ENCODE measurements at regions of chr5 and their contacts with region 1.

Region 1: DNA sequence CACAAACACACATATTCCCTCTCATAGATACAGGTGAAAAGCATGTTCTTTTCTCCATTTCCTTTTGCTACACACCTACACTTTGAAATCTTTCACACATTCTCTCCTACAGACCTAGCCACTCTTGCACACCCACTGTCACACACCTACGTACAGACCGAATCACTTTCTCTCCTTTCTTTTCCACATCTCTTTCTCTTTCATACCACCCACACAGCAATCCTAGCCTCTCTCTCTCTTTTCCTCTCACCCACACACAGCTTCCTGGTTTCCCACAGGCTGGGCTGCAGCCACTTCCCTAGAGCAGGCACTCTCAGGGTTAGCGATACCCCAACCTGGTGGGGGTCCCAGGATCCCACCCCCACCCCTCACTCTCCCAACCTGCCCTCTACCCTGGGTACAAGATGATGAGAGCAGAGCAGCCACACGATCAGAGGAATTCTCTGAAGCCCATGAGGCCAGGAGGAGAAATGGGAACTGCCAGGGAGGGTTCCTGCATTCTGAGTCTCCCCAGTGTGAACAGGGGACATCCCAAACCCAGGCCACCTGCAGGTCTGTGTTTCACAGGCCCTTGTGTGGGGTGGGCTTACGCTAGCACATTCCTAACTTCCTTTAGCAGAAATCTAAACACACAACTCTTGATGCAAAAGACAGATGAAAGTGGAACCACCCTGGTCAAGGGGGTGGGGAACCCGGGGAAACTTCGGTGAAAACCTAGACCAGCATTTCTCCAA is 17.1 kb upstream of the SYNPO start:
- DNase-seq: no peak
- H3K4me3 Mint-ChIP-seq: peak overlapping the region; percentile 71
- H3K27ac Mint-ChIP-seq: no peak overlapping the region
- H3K4me1 Mint-ChIP-seq: peaks cover 26% of the 10 kb centered on the region
- H3K27me3 Mint-ChIP-seq: peaks cover 4% of the 10 kb centered on the region

Region 2: DNA sequence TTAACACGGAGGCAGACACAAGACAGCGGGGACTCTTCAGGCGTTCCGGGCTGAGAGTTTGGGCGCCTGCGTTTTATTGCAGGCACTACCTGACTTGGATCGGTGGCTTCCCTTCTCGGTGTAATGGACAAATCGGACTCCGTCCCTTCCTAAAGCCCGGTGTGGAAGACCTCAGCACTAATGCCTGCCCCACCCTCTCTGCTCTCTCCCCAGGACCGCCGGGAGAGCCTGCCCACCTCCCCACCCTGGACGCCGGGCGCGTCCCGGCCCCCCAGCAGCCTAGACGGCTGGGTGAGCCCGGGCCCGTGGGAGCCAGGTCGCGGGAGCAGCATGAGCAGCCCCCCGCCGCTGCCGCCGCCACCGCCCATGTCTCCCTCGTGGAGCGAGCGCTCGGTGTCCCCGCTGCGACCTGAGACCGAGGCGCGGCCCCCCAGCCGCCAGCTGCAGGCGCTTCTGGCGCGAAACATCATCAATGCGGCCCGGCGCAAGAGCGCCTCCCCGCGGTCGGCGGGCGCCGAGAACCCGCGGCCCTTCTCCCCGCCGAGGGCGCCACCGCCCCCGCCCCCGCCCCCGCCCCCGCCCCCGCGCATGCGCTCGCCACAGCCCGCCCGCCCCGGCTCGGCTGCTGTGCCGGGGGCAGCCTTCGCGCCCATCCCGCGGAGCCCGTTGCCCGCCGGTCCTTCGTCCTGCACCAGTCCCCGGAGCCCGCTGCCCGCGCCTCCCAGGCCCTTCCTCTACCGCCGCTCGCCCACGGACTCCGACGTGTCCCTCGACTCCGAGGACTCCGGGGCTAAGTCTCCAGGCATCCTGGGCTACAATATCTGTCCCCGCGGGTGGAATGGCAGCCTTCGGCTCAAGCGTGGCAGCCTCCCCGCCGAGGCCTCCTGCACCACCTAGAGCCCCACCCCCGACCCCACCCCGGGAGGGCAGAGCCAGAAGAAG is 33.1 kb after region 1 on chr5:
- CTCF ChIA-PET with region 1: no interaction called
- intact Hi-C with region 1: loop called (anchors 2 kb)
- DNase-seq: peak; percentile 77
- H3K4me3 Mint-ChIP-seq: peak overlapping the region; percentile 76
- H3K27ac Mint-ChIP-seq: no peak overlapping the region
- H3K4me1 Mint-ChIP-seq: peaks cover 2% of the 10 kb centered on the region
- H3K27me3 Mint-ChIP-seq: no peaks in the 10 kb centered on the region

Region 3: GRCh38 chr5:150809363-150809762 is 186.0 kb after region 1 on chr5:
- CTCF ChIA-PET with region 1: no interaction called
- intact Hi-C with region 1: no loop called
- DNase-seq: no peak
- H3K4me3 Mint-ChIP-seq: no peak overlapping the region
- H3K27ac Mint-ChIP-seq: no peak overlapping the region
- H3K4me1 Mint-ChIP-seq: no peaks in the 10 kb centered on the region
- H3K27me3 Mint-ChIP-seq: no peaks in the 10 kb centered on the region